Activated naive CD4-positive, alpha-beta T cell treated with anti-CD3 and anti-CD28 coated beads for 36 hours (primary cell): ENCODE measurements at regions of chr4 and their contacts with region 1.

Region 1: DNA sequence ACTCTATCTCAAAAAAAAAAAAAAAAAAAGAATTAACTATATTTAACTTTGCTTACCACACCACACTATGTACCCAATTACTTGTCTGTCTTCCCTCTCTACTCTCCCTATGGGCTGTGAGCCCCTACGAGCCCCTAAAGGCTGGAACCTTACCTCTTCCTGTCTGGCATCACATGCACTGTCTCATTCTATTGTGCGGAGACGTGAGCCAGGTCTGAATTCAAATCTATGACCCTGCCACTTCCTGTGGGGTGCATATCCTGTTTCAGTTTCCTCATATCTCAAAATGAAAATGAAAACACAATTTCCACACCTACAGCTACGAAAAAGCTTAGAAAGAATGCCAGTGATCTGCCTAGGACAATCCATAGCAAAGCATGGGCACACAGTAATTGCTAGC is 42.9 kb upstream of the HS3ST1 start:
- DNase-seq: peak; percentile 73
- H3K4me3 Mint-ChIP-seq: peak overlapping the region; percentile 45
- H3K27ac Mint-ChIP-seq: peak overlapping the region; percentile 70
- H3K4me1 Mint-ChIP-seq: peaks cover 41% of the 10 kb centered on the region
- H3K27me3 Mint-ChIP-seq: no peaks in the 10 kb centered on the region

Region 2: DNA sequence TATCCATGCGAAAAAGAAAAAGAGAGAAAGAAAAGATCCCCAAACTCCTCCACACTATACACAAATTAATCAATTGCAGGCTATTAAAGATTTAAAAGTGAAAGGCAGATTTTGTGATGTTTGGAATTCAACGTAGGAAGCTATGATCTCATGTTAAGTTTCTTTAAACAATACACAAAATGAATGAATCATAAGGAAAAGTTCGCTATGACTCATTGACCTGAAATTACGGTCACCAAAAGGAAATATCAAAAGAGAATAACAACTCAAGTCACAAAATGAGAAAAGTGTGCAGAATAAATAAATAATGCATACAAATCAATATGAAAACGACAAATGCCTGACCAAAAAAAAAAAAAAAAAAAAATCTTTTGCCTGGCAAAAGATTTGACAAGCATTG is 815.6 kb before region 1 on chr4:
- CTCF ChIA-PET with region 1: no interaction called
- intact Hi-C with region 1: loop called (anchors 5 kb)
- DNase-seq: no peak
- H3K4me3 Mint-ChIP-seq: no peak overlapping the region
- H3K27ac Mint-ChIP-seq: no peak overlapping the region
- H3K4me1 Mint-ChIP-seq: peaks cover 23% of the 10 kb centered on the region
- H3K27me3 Mint-ChIP-seq: no peaks in the 10 kb centered on the region

Region 3: GRCh38 chr4:10730590-10730989 is 741.0 kb before region 1 on chr4:
- CTCF ChIA-PET with region 1: no interaction called
- intact Hi-C with region 1: loop called (anchors 5 kb)
- DNase-seq: no peak
- H3K4me3 Mint-ChIP-seq: no peak overlapping the region
- H3K27ac Mint-ChIP-seq: no peak overlapping the region
- H3K4me1 Mint-ChIP-seq: peaks cover 39% of the 10 kb centered on the region
- H3K27me3 Mint-ChIP-seq: no peaks in the 10 kb centered on the region

Region 4: DNA sequence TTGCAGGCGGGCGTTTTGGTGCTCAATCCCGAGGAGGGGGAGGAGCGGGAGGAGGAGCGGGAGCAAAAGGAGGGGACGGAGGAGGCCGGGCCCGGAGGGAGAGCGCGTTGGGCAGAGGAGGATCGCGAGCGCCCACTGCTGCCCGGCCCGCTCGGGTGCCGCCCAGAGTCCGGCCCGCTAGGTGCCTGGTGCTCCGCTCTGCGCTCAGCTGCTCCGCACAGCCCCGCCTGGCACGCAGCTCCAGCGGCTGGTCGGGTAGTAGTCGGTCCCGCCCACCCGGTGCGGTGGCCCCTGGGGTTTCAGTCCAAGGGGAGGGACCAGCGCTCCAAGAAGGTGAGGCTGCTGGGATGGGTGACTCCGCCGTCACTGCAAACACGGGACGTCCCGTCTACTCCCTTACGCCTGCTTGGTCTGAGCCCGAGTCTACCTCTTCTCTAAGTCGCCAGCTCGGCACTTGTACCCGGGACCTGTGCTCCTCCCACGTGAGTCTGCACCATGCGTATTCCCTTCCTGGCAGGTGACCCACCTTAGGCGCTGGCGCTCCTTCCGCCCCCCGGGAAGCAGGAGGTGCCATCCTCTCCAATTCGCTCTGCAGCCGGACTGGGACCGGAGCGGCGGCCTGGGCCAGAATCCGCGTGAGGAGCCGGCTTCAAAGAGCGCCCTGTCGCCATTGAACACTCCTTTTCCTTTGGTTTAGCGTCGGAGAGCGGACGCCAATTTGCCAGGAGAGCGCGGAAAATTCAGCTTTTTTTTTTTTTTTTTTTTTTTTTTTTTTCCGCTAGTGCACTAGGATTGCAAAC is 42.5 kb before region 1 on chr4:
- CTCF ChIA-PET with region 1: no interaction called
- intact Hi-C with region 1: loop called (anchors 2 kb)
- DNase-seq: peak; percentile 64
- H3K4me3 Mint-ChIP-seq: peak overlapping the region; percentile 63
- H3K27ac Mint-ChIP-seq: no peak overlapping the region
- H3K4me1 Mint-ChIP-seq: peaks cover 14% of the 10 kb centered on the region
- H3K27me3 Mint-ChIP-seq: peaks cover 31% of the 10 kb centered on the region

Region 5: GRCh38 chr4:11487876-11488544 is 16.4 kb after region 1 on chr4:
- CTCF ChIA-PET with region 1: interaction called, 3 read pairs
- intact Hi-C with region 1: loop called (anchors 1 kb)
- DNase-seq: no peak
- H3K4me3 Mint-ChIP-seq: no peak overlapping the region
- H3K27ac Mint-ChIP-seq: no peak overlapping the region
- H3K4me1 Mint-ChIP-seq: peaks cover 31% of the 10 kb centered on the region
- H3K27me3 Mint-ChIP-seq: no peaks in the 10 kb centered on the region

Region 6: DNA sequence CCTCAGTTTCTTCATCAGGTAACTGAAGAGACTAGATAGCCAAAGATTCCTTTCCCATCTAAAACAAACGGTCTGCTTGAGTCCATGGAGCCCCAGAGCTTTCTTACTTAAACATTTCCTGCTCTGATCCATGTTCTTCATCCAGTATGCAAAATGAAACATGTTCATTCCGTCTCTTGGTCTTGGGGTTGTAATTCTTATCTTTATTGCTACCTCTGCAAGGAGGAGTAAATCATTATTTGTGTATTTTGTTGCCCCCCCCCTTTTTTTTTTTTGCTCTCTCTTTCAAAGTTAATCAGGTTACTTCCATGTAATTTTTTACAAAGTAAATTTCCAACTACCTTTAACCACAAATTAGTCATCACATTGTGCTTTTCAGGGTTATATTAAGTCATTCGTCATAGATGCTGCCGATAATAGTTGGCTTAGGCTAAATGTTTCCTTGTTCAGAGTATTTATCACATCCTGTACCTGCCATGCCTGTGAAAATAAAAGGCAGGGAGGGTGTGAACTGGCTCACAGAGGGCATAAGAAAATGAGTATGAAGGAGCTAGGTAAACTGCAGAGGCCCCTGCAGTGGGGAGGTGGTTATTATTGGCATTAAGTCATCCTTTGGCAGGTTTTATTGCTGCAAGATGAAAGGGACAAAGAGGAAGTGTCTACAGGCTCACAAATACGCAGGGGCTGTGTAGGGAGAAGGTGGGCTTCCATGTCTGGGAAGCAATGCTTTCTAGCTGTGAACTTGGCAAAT is 33.8 kb after region 1 on chr4:
- CTCF ChIA-PET with region 1: no interaction called
- intact Hi-C with region 1: loop called (anchors 1 kb)
- DNase-seq: peak; percentile 62
- H3K4me3 Mint-ChIP-seq: no peak overlapping the region
- H3K27ac Mint-ChIP-seq: no peak overlapping the region
- H3K4me1 Mint-ChIP-seq: peaks cover 24% of the 10 kb centered on the region
- H3K27me3 Mint-ChIP-seq: no peaks in the 10 kb centered on the region

Region 7: DNA sequence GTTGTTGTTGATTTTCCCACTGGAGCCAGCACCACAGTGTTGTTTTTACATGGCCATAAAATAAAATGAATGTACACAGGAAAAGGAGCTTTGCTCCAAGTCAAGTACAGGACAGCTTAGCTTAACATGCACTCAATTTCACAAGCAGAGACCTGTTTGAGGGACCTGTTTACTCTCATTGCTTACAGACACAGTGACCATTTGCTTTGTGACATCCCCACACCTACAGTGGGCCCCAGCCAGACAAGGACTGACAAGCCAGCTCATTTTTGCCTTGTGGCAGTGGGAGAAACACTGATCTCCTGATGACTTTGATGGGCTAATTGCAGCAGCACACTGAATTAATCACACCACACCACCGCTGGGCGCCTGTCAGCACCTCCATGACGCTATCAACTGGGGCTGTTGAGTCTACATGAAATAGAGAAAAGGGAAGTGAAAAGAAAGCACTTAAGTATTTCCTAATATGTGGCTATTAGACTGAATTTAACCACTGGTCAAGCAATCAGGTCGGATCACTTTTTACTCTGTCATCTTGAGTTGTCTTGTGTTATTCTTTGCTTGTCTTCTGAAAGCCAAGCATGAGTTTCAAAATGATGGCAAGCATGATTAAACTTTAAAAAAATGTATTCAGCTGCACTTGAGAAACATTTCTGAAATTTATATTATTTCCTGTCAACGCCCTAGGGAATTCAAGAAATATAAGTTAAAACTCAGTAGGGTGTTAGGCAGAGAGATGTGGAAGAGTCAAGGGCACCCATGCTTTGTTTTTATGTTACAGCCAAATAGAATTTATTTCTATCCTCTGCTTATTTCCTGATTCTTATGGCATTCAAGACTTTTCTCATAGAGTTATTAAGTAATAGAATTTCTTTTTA is 1454.8 kb after region 1 on chr4:
- CTCF ChIA-PET with region 1: no interaction called
- intact Hi-C with region 1: no loop called
- DNase-seq: no peak
- H3K4me3 Mint-ChIP-seq: no peak overlapping the region
- H3K27ac Mint-ChIP-seq: no peak overlapping the region
- H3K4me1 Mint-ChIP-seq: no peaks in the 10 kb centered on the region
- H3K27me3 Mint-ChIP-seq: peaks cover 2% of the 10 kb centered on the region